CD8-positive, alpha-beta T cell (primary cell): ENCODE measurements at regions of chr3 and their contacts with region 1.

Region 1: DNA sequence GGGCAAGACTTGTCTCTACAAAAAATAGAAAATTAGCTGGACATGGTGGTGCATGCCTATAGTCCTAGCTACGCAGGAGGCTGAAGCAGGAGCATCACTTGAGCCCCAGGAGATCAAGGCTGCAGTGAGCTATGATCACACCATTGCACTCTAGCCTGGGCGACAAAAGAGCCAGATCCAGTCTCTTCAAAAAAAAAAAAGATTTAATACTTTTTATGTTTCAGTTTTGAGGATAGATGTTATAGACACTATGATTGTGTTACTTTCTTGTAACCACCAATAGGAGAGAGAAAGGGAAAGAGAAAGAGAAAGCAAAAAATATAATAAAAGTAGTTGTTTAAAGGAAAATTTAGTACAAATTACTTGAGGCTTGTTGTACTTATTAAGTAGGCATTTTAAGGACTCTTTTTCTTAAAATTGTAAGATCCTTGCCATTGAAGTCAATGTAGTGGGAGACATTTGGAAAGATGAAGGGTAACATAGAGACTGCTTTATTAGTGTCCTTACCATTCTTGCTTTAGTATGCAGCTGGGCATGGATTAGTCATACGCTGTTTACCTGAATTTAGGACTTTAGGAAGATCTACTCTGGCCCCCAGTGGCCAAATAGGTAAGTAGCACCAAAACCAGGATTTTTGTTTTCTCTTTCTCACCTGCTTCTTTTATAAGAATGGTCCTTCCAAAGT is 35.1 kb upstream of the ZDHHC23 start:
- DNase-seq: peak in 5 of 9 experiments; percentile 21 to 76 (median 23)
- ATAC-seq: peak; percentile 97
- H3K4me3 ChIP-seq: peak overlapping the region; percentile 13 to 18
- H3K4me3 Mint-ChIP-seq: peak overlapping the region; percentile 56
- H3K27ac ChIP-seq: peak overlapping the region in 1 of 2 experiments; percentile 14
- H3K27ac Mint-ChIP-seq: peak overlapping the region; percentile 30
- H3K4me1 ChIP-seq: peaks cover 5% of the 10 kb centered on the region
- H3K4me1 Mint-ChIP-seq: peaks cover 6% of the 10 kb centered on the region
- H3K27me3 ChIP-seq: no peaks in the 10 kb centered on the region
- H3K27me3 Mint-ChIP-seq: no peaks in the 10 kb centered on the region
- CTCF ChIP-seq: peak; percentile 65

Region 2: GRCh38 chr3:113043686-113044085 is 869.0 kb before region 1 on chr3:
- CTCF ChIA-PET with region 1: no interaction called
- POLR2A ChIA-PET with region 1: no interaction called
- intact Hi-C with region 1: loop called in 1 of 2 experiments (anchors 10 kb)
- DNase-seq: no peak
- ATAC-seq: no peak
- H3K4me3 ChIP-seq: no peak overlapping the region
- H3K4me3 Mint-ChIP-seq: no peak overlapping the region
- H3K27ac ChIP-seq: no peak overlapping the region
- H3K27ac Mint-ChIP-seq: no peak overlapping the region
- H3K4me1 ChIP-seq: no peaks in the 10 kb centered on the region
- H3K4me1 Mint-ChIP-seq: peaks cover 2% of the 10 kb centered on the region
- H3K27me3 ChIP-seq: no peaks in the 10 kb centered on the region
- H3K27me3 Mint-ChIP-seq: no peaks in the 10 kb centered on the region
- CTCF ChIP-seq: no peak

Region 3: GRCh38 chr3:113495035-113495434 is 417.7 kb before region 1 on chr3:
- CTCF ChIA-PET with region 1: no interaction called
- POLR2A ChIA-PET with region 1: no interaction called
- intact Hi-C with region 1: loop called in 1 of 2 experiments (anchors 5 kb)
- DNase-seq: peak in 6 of 9 experiments; percentile 38 to 67 (median 54)
- ATAC-seq: no peak
- H3K4me3 ChIP-seq: no peak overlapping the region
- H3K4me3 Mint-ChIP-seq: no peak overlapping the region
- H3K27ac ChIP-seq: no peak overlapping the region
- H3K27ac Mint-ChIP-seq: no peak overlapping the region
- H3K4me1 ChIP-seq: no peaks in the 10 kb centered on the region
- H3K4me1 Mint-ChIP-seq: no peaks in the 10 kb centered on the region
- H3K27me3 ChIP-seq: no peaks in the 10 kb centered on the region
- H3K27me3 Mint-ChIP-seq: no peaks in the 10 kb centered on the region
- CTCF ChIP-seq: peak; percentile 54

Region 4: DNA sequence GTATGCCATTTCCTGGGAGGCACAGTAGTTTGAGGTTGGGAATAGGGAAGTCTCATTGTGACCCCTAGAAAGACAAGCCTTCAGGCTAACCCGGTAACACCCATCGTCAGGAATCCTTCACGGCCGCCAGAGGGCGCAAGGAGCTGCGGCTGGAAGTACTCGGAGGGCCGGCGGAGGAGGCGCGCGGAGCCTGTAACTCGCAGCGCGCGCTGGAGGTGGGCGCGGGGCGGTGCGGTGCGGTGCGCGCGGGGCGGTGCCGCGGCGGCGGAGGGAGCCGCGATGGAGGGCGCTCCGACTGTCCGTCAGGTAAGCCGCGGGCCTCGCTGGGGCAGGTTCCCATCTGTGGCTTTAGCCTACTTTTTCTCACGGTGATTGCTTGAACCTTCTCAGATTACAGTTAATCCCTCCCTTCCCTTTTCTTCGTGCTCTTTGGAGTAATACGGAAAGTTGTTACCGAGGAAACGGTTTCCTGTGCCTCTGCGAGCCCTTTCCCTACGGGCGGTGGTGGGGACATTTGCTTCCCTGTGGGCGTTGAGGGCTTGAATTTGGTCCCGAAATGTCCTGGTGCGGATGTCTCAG is 74.0 kb before region 1 on chr3 and contains the start of gene GRAMD1C:
- CTCF ChIA-PET with region 1: interaction called, 16 read pairs
- POLR2A ChIA-PET with region 1: interaction called, 3 read pairs
- intact Hi-C with region 1: loop called (anchors 1 kb)
- DNase-seq: peak; percentile 65 to 93 (median 85)
- ATAC-seq: peak; percentile 99
- H3K4me3 ChIP-seq: peak within 1 kb of the TSS; percentile 47 to 53
- H3K4me3 Mint-ChIP-seq: peak within 1 kb of the TSS; percentile 80
- H3K27ac ChIP-seq: no peak within 1 kb of the TSS
- H3K27ac Mint-ChIP-seq: no peak within 1 kb of the TSS
- H3K4me1 ChIP-seq: no peaks in the 10 kb centered on the region
- H3K4me1 Mint-ChIP-seq: peaks cover 9% of the 10 kb centered on the region
- H3K27me3 ChIP-seq: no peaks in the 10 kb centered on the region
- H3K27me3 Mint-ChIP-seq: no peaks in the 10 kb centered on the region
- CTCF ChIP-seq: peak; percentile 81
- total RNA-seq, gene GRAMD1C: 0.65 to 1.00 TPM

Region 5: GRCh38 chr3:113844622-113845222 is 68.0 kb before region 1 on chr3:
- CTCF ChIA-PET with region 1: interaction called, 16 read pairs
- POLR2A ChIA-PET with region 1: interaction called, 3 read pairs
- intact Hi-C with region 1: loop called in 1 of 2 experiments (anchors 1 kb)
- DNase-seq: peak in 2 of 9 experiments; percentile 30 to 49
- ATAC-seq: no peak
- H3K4me3 ChIP-seq: no peak overlapping the region
- H3K4me3 Mint-ChIP-seq: no peak overlapping the region
- H3K27ac ChIP-seq: no peak overlapping the region
- H3K27ac Mint-ChIP-seq: no peak overlapping the region
- H3K4me1 ChIP-seq: no peaks in the 10 kb centered on the region
- H3K4me1 Mint-ChIP-seq: no peaks in the 10 kb centered on the region
- H3K27me3 ChIP-seq: no peaks in the 10 kb centered on the region
- H3K27me3 Mint-ChIP-seq: no peaks in the 10 kb centered on the region
- CTCF ChIP-seq: peak; percentile 60

Region 6: DNA sequence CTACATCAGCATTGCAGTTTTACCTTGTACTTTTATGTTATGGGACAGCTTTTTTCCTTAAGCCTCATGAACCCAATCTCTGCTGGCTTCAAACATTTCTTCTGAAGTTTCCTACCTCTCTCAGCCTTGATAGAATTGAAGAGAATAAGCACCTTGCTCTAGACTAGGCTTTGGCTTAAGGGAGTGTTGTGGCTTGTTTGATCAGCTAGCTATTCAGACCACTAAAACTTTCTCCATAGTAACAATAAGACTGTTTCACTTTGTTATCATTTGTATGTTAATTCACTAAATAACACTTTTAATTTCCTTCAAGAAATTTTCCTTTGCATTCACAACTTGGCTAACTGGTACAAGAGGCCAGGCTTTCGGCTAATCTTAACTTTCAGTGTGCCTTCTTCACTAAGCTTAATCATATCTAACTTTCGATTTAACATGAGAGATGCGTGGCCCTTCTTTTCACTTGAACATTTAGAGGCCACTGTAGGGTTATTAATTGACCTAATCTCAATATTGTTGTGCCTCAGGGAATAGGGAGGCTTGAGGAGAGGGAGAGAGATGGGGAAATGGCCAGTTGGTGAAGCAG is 373.0 kb after region 1 on chr3:
- CTCF ChIA-PET with region 1: no interaction called
- POLR2A ChIA-PET with region 1: no interaction called
- intact Hi-C with region 1: no loop called
- DNase-seq: peak in 2 of 9 experiments; percentile 40 to 61
- ATAC-seq: peak; percentile 74
- H3K4me3 ChIP-seq: peak overlapping the region in 1 of 2 experiments; percentile 1
- H3K4me3 Mint-ChIP-seq: peak overlapping the region; percentile 57
- H3K27ac ChIP-seq: peak overlapping the region; percentile 42 to 78
- H3K27ac Mint-ChIP-seq: peak overlapping the region; percentile 91
- H3K4me1 ChIP-seq: peaks cover 12% of the 10 kb centered on the region
- H3K4me1 Mint-ChIP-seq: peaks cover 23% of the 10 kb centered on the region
- H3K27me3 ChIP-seq: no peaks in the 10 kb centered on the region
- H3K27me3 Mint-ChIP-seq: no peaks in the 10 kb centered on the region
- CTCF ChIP-seq: no peak